Naive thymus-derived CD4-positive, alpha-beta T cell (primary cell): ENCODE measurements at regions of chr10 and their contacts with region 1.

Region 1: GRCh38 chr10:12348870-12349628 is at the start of gene CAMK1D:
- DNase-seq: peak; percentile 83 to 92 (median 90)
- ATAC-seq: peak; percentile 84
- H3K4me3 ChIP-seq: peak within 1 kb of the TSS; percentile 83
- H3K4me3 Mint-ChIP-seq: peak within 1 kb of the TSS; percentile 78 to 99 (median 97)
- H3K27ac ChIP-seq: peak within 1 kb of the TSS; percentile 89
- H3K27ac Mint-ChIP-seq: peak within 1 kb of the TSS; percentile 86 to 99 (median 97)
- H3K4me1 ChIP-seq: peaks cover 18 to 19% of the 10 kb centered on the region in 2 donors
- H3K4me1 Mint-ChIP-seq: peaks cover 23 to 51% (median 42%) of the 10 kb centered on the region in 7 donors
- H3K27me3 ChIP-seq: no peaks in the 10 kb centered on the region
- H3K27me3 Mint-ChIP-seq: peaks cover 0 to 64% (median 0%) of the 10 kb centered on the region in 5 donors
- total RNA-seq, gene CAMK1D: 12.5 to 43.2 (median 18.7) TPM

Region 2: GRCh38 chr10:11729726-11730315 is 619.2 kb before region 1 on chr10:
- CTCF ChIA-PET with region 1: no interaction called
- POLR2A ChIA-PET with region 1: no interaction called
- intact Hi-C with region 1: no loop called
- DNase-seq: no peak
- ATAC-seq: no peak
- H3K4me3 ChIP-seq: no peak overlapping the region
- H3K4me3 Mint-ChIP-seq: no peak overlapping the region
- H3K27ac ChIP-seq: no peak overlapping the region
- H3K27ac Mint-ChIP-seq: no peak overlapping the region
- H3K4me1 ChIP-seq: no peaks in the 10 kb centered on the region
- H3K4me1 Mint-ChIP-seq: peaks cover 0 to 6% (median 5%) of the 10 kb centered on the region in 7 donors
- H3K27me3 ChIP-seq: no peaks in the 10 kb centered on the region
- H3K27me3 Mint-ChIP-seq: peaks cover 0 to 20% (median 5%) of the 10 kb centered on the region in 5 donors

Region 3: DNA sequence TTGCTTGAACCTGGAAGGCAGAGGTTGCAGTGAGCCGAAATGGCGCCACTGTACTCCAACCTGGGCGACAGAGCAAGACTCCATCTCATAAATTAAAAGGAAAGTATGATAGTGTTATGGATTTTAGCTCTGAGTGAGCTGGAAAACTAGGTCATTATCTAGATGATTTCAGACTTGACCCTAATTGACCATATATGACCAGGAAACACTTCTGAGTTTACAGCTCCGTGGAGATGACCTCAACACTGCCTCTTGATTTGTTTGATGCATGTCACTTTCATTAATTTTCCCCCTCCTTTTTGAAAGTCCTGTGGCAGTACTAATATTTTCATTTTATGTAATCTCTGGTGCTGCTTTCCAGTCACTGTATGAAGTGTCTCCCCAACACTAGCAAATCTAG is 227.4 kb before region 1 on chr10:
- CTCF ChIA-PET with region 1: no interaction called
- POLR2A ChIA-PET with region 1: no interaction called
- intact Hi-C with region 1: loop called in 1 of 2 experiments (anchors 2 kb)
- DNase-seq: no peak
- ATAC-seq: no peak
- H3K4me3 ChIP-seq: no peak overlapping the region
- H3K4me3 Mint-ChIP-seq: no peak overlapping the region
- H3K27ac ChIP-seq: no peak overlapping the region
- H3K27ac Mint-ChIP-seq: peak overlapping the region in 1 of 9 donors; percentile 86
- H3K4me1 ChIP-seq: no peaks in the 10 kb centered on the region
- H3K4me1 Mint-ChIP-seq: peaks cover 1 to 31% (median 7%) of the 10 kb centered on the region in 7 donors
- H3K27me3 ChIP-seq: no peaks in the 10 kb centered on the region
- H3K27me3 Mint-ChIP-seq: no peaks in the 10 kb centered on the region

Region 4: DNA sequence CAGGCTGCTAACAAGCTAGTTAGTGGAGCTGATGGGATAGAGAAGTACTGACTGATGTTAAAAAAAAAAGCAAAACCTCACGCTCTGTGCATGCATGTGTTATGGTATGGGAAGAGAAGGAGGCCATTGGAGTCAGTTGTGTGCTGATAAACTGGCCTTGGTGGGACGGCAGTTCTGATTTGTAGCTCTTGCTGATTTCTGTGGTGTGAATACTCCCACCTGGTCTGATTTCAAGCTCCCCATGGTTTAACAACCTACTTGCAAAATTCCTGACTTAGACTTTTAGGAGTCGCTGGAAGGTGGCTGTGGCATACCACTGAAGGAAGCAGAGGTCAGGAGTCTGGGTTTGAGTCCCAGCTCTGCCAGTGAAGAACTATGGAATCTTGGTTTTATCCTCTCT is 15.5 kb after region 1 on chr10:
- CTCF ChIA-PET with region 1: interaction called, 8 read pairs
- POLR2A ChIA-PET with region 1: interaction called, 11 read pairs
- intact Hi-C with region 1: loop called (anchors 1 to 2 kb)
- DNase-seq: no peak
- ATAC-seq: no peak
- H3K4me3 ChIP-seq: no peak overlapping the region
- H3K4me3 Mint-ChIP-seq: peak overlapping the region in 2 of 10 donors; percentile 27 to 51
- H3K27ac ChIP-seq: no peak overlapping the region
- H3K27ac Mint-ChIP-seq: peak overlapping the region in 3 of 9 donors; percentile 13 to 56 (median 49)
- H3K4me1 ChIP-seq: peaks cover 9 to 14% of the 10 kb centered on the region in 2 donors
- H3K4me1 Mint-ChIP-seq: peaks cover 16 to 68% (median 50%) of the 10 kb centered on the region in 7 donors
- H3K27me3 ChIP-seq: no peaks in the 10 kb centered on the region
- H3K27me3 Mint-ChIP-seq: no peaks in the 10 kb centered on the region

Region 5: DNA sequence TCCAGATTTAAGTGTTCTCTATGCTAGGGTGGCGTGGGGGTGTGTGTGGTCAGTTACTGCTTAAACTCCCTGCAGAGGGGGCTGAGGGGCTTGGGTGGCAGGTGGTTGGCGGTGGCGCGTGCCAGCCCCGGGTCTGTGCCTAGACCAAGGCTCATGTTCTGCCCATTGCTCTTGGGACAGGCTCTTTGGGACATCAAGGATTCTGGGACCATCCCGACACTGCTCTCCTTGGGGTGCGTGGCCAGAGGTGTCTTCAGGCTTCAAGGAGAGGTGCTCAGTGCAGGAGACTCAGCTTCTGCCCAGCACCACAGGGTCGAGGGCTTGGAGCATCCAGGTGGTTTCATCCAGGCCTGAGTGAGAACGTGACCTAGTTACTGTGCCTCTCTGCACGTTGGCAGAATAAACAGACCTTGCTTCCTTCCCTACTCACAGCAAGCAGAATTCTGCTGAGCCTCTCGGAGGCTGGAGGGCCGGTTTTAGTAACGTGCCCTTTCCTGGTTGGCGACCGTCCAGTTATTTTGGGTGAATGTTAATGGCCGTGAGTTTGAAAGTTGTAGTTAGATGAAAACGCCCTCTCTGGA is 40.2 kb after region 1 on chr10:
- CTCF ChIA-PET with region 1: no interaction called
- POLR2A ChIA-PET with region 1: no interaction called
- intact Hi-C with region 1: no loop called
- DNase-seq: no peak
- ATAC-seq: no peak
- H3K4me3 ChIP-seq: no peak overlapping the region
- H3K4me3 Mint-ChIP-seq: no peak overlapping the region
- H3K27ac ChIP-seq: no peak overlapping the region
- H3K27ac Mint-ChIP-seq: peak overlapping the region in 1 of 9 donors; percentile 61
- H3K4me1 ChIP-seq: no peaks in the 10 kb centered on the region
- H3K4me1 Mint-ChIP-seq: peaks cover 2 to 62% (median 50%) of the 10 kb centered on the region in 7 donors
- H3K27me3 ChIP-seq: no peaks in the 10 kb centered on the region
- H3K27me3 Mint-ChIP-seq: no peaks in the 10 kb centered on the region

Region 6: GRCh38 chr10:12484941-12485805 is 136.1 kb after region 1 on chr10:
- CTCF ChIA-PET with region 1: no interaction called
- POLR2A ChIA-PET with region 1: no interaction called
- intact Hi-C with region 1: loop called in 1 of 2 experiments (anchors 1 kb)
- DNase-seq: peak in 7 of 9 donors; percentile 13 to 38 (median 27)
- ATAC-seq: peak; percentile 70
- H3K4me3 ChIP-seq: no peak overlapping the region
- H3K4me3 Mint-ChIP-seq: peak overlapping the region; percentile 45 to 77 (median 71)
- H3K27ac ChIP-seq: no peak overlapping the region
- H3K27ac Mint-ChIP-seq: peak overlapping the region; percentile 61 to 90 (median 84)
- H3K4me1 ChIP-seq: peaks cover 0 to 24% of the 10 kb centered on the region in 2 donors
- H3K4me1 Mint-ChIP-seq: peaks cover 15 to 70% (median 47%) of the 10 kb centered on the region in 7 donors
- H3K27me3 ChIP-seq: no peaks in the 10 kb centered on the region
- H3K27me3 Mint-ChIP-seq: no peaks in the 10 kb centered on the region

Region 7: DNA sequence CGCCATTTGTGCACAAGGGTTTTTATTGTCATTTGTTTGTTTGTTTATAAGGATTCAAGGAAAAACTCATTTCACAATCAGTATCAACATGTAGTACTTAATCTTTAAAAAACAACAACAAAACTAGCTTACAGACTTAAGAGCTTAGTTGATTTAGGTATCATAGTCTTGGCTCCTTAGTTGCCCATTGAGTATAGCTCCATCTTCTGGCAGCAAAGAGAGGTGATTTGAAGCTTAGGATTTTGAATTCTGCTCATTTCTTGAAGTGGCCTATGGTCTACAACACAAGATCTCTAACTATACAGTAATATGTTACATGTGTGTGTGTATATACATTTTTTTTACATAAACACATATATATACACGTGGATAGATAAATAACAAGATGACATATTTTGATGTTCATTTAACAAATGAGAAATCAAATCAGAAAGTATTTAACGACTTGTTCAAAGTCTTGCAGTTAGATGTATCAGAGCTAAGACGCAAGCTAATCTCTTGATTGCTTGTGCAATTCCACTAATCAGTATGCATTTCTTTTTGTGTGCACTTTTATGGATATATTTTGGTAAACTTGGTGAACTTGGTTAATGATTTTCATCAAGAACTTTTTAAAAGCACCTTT is 307.6 kb after region 1 on chr10:
- CTCF ChIA-PET with region 1: interaction called, 3 read pairs
- POLR2A ChIA-PET with region 1: no interaction called
- intact Hi-C with region 1: loop called (anchors 1 to 2 kb)
- DNase-seq: peak in 7 of 9 donors; percentile 25 to 73 (median 55)
- ATAC-seq: peak; percentile 86
- H3K4me3 ChIP-seq: no peak overlapping the region
- H3K4me3 Mint-ChIP-seq: peak overlapping the region in 1 of 10 donors; percentile 55
- H3K27ac ChIP-seq: no peak overlapping the region
- H3K27ac Mint-ChIP-seq: peak overlapping the region in 4 of 9 donors; percentile 29 to 68 (median 42)
- H3K4me1 ChIP-seq: no peaks in the 10 kb centered on the region
- H3K4me1 Mint-ChIP-seq: peaks cover 0 to 22% (median 4%) of the 10 kb centered on the region in 7 donors
- H3K27me3 ChIP-seq: no peaks in the 10 kb centered on the region
- H3K27me3 Mint-ChIP-seq: no peaks in the 10 kb centered on the region

Region 8: DNA sequence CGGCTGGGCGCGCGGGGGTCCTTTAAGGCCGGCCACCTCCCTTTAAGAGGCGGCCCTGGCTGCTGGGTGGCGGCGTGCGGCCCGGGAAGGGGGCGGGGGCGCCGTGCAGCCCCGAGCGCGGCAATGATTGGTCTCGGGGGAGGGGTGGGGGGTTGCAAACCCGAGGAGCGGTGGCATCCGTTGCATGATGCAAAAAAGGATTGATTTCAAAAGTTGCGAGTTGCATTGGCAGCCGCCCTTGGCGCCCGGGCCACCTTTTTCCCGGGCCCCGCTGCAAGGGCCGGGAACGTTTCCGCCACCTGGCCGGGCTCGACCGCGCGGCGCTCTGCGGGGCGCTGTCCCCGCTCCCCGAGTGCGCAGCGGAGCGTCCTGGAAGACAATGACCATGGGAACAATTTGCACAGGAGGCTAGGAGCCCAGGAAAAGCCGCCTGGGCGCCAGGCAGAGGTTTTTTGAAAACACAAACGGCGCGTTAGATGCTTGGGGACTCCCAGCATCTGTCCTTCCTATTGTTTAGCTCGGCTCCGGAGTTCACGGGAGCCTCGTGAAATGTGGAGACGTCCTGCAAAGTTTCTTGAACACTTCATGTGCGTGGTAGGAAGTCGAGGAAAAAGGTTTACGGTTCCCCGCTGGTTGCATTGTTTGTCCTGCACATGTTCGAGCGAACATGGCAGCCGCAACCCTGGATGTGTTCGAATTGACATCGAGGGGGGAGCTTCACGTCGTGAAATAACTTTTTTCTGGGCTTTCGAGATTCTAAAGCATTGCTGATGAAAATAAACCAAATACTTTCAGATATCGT is 999.4 kb after region 1 on chr10 and contains the start of gene SEPHS1:
- CTCF ChIA-PET with region 1: no interaction called
- POLR2A ChIA-PET with region 1: no interaction called
- intact Hi-C with region 1: loop called in 1 of 2 experiments (anchors 2 kb)
- DNase-seq: peak; percentile 62 to 87 (median 84)
- ATAC-seq: peak; percentile 83
- H3K4me3 ChIP-seq: peak within 1 kb of the TSS; percentile 95
- H3K4me3 Mint-ChIP-seq: peak within 1 kb of the TSS; percentile 92 to 99 (median 96)
- H3K27ac ChIP-seq: peak within 1 kb of the TSS; percentile 84
- H3K27ac Mint-ChIP-seq: peak within 1 kb of the TSS; percentile 90 to 98 (median 97)
- H3K4me1 ChIP-seq: peaks cover 18 to 36% of the 10 kb centered on the region in 2 donors
- H3K4me1 Mint-ChIP-seq: peaks cover 28 to 69% (median 62%) of the 10 kb centered on the region in 7 donors
- H3K27me3 ChIP-seq: no peaks in the 10 kb centered on the region
- H3K27me3 Mint-ChIP-seq: peaks cover 0 to 9% (median 0%) of the 10 kb centered on the region in 5 donors
- total RNA-seq, gene SEPHS1: 23.7 to 57.3 (median 36.5) TPM